ENCODE measurements at regions of chr17 and their contacts with region 1.

Region 1: GRCh38 chr17:58082870-58083490 is at the start of gene DYNLL2:
- DNase-seq: peak; percentile 74 to 88 (median 87)
- ATAC-seq: peak; percentile 91
- H3K4me3 ChIP-seq: peak within 1 kb of the TSS; percentile 88
- H3K4me3 Mint-ChIP-seq: peak within 1 kb of the TSS; percentile 88 to 95 (median 92)
- H3K27ac ChIP-seq: peak within 1 kb of the TSS; percentile 94
- H3K27ac Mint-ChIP-seq: peak within 1 kb of the TSS; percentile 81 to 95 (median 90)
- H3K4me1 ChIP-seq: peaks cover 23 to 34% of the 10 kb centered on the region in 2 donors
- H3K4me1 Mint-ChIP-seq: peaks cover 26 to 40% (median 34%) of the 10 kb centered on the region in 7 donors
- H3K27me3 ChIP-seq: no peaks in the 10 kb centered on the region
- H3K27me3 Mint-ChIP-seq: peaks cover 0 to 31% (median 0%) of the 10 kb centered on the region in 5 donors
- total RNA-seq, gene DYNLL2: 30.1 to 39.1 (median 35.1) TPM

Region 2: GRCh38 chr17:56833809-56834379 is 1249.1 kb before region 1 on chr17 and contains the starts of genes C17orf67 and DGKE:
- CTCF ChIA-PET with region 1: no interaction called
- POLR2A ChIA-PET with region 1: no interaction called
- intact Hi-C with region 1: loop called in 1 of 2 experiments (anchors 2 kb)
- DNase-seq: peak; percentile 95 to 100 (median 98)
- ATAC-seq: peak; percentile 97
- H3K4me3 ChIP-seq: peak within 1 kb of the TSS; percentile 91
- H3K4me3 Mint-ChIP-seq: peak within 1 kb of the TSS; percentile 91 to 98 (median 95)
- H3K27ac ChIP-seq: peak within 1 kb of the TSS; percentile 85
- H3K27ac Mint-ChIP-seq: peak within 1 kb of the TSS; percentile 83 to 95 (median 93)
- H3K4me1 ChIP-seq: peaks cover 41 to 42% of the 10 kb centered on the region in 2 donors
- H3K4me1 Mint-ChIP-seq: peaks cover 34 to 74% (median 62%) of the 10 kb centered on the region in 7 donors
- H3K27me3 ChIP-seq: no peaks in the 10 kb centered on the region
- H3K27me3 Mint-ChIP-seq: no peaks in the 10 kb centered on the region
- total RNA-seq, gene C17orf67: 3.6 to 9.1 (median 5.4) TPM
- total RNA-seq, gene DGKE: 23.7 to 39.2 (median 35.6) TPM

Region 3: GRCh38 chr17:57995076-57995956 is 87.7 kb before region 1 on chr17:
- CTCF ChIA-PET with region 1: no interaction called
- POLR2A ChIA-PET with region 1: interaction called, 4 read pairs
- intact Hi-C with region 1: loop called in 1 of 2 experiments (anchors 2 kb)
- DNase-seq: peak in 8 of 9 donors; percentile 27 to 66 (median 52)
- ATAC-seq: peak; percentile 91
- H3K4me3 ChIP-seq: no peak overlapping the region
- H3K4me3 Mint-ChIP-seq: peak overlapping the region in 4 of 10 donors; percentile 1 to 30 (median 12)
- H3K27ac ChIP-seq: peak overlapping the region; percentile 56
- H3K27ac Mint-ChIP-seq: peak overlapping the region; percentile 10 to 90 (median 70)
- H3K4me1 ChIP-seq: peaks cover 0 to 19% of the 10 kb centered on the region in 2 donors
- H3K4me1 Mint-ChIP-seq: peaks cover 16 to 61% (median 52%) of the 10 kb centered on the region in 7 donors
- H3K27me3 ChIP-seq: no peaks in the 10 kb centered on the region
- H3K27me3 Mint-ChIP-seq: no peaks in the 10 kb centered on the region

Region 4: GRCh38 chr17:58121925-58122324 is 38.9 kb after region 1 on chr17:
- CTCF ChIA-PET with region 1: no interaction called
- POLR2A ChIA-PET with region 1: no interaction called
- intact Hi-C with region 1: loop called in 1 of 2 experiments (anchors 2 kb)
- DNase-seq: peak in 7 of 9 donors; percentile 36 to 70 (median 56)
- ATAC-seq: peak; percentile 81
- H3K4me3 ChIP-seq: no peak overlapping the region
- H3K4me3 Mint-ChIP-seq: peak overlapping the region in 2 of 10 donors; percentile 27 to 33
- H3K27ac ChIP-seq: no peak overlapping the region
- H3K27ac Mint-ChIP-seq: peak overlapping the region in 4 of 9 donors; percentile 10 to 32 (median 12)
- H3K4me1 ChIP-seq: peaks cover 5 to 8% of the 10 kb centered on the region in 2 donors
- H3K4me1 Mint-ChIP-seq: peaks cover 2 to 28% (median 14%) of the 10 kb centered on the region in 7 donors
- H3K27me3 ChIP-seq: no peaks in the 10 kb centered on the region
- H3K27me3 Mint-ChIP-seq: peaks cover 5 to 32% (median 7%) of the 10 kb centered on the region in 5 donors

Region 5: GRCh38 chr17:58172369-58173071 is 89.5 kb after region 1 on chr17:
- CTCF ChIA-PET with region 1: no interaction called
- POLR2A ChIA-PET with region 1: no interaction called
- intact Hi-C with region 1: loop called in 1 of 2 experiments (anchors 1 kb)
- DNase-seq: peak in 7 of 9 donors; percentile 42 to 69 (median 61)
- ATAC-seq: peak; percentile 80
- H3K4me3 ChIP-seq: no peak overlapping the region
- H3K4me3 Mint-ChIP-seq: peak overlapping the region in 9 of 10 donors; percentile 8 to 71 (median 35)
- H3K27ac ChIP-seq: no peak overlapping the region
- H3K27ac Mint-ChIP-seq: peak overlapping the region in 8 of 9 donors; percentile 2 to 96 (median 74)
- H3K4me1 ChIP-seq: peaks cover 38 to 39% of the 10 kb centered on the region in 2 donors
- H3K4me1 Mint-ChIP-seq: peaks cover 31 to 49% (median 48%) of the 10 kb centered on the region in 7 donors
- H3K27me3 ChIP-seq: no peaks in the 10 kb centered on the region
- H3K27me3 Mint-ChIP-seq: peaks cover 0 to 20% (median 2%) of the 10 kb centered on the region in 5 donors

Region 6: DNA sequence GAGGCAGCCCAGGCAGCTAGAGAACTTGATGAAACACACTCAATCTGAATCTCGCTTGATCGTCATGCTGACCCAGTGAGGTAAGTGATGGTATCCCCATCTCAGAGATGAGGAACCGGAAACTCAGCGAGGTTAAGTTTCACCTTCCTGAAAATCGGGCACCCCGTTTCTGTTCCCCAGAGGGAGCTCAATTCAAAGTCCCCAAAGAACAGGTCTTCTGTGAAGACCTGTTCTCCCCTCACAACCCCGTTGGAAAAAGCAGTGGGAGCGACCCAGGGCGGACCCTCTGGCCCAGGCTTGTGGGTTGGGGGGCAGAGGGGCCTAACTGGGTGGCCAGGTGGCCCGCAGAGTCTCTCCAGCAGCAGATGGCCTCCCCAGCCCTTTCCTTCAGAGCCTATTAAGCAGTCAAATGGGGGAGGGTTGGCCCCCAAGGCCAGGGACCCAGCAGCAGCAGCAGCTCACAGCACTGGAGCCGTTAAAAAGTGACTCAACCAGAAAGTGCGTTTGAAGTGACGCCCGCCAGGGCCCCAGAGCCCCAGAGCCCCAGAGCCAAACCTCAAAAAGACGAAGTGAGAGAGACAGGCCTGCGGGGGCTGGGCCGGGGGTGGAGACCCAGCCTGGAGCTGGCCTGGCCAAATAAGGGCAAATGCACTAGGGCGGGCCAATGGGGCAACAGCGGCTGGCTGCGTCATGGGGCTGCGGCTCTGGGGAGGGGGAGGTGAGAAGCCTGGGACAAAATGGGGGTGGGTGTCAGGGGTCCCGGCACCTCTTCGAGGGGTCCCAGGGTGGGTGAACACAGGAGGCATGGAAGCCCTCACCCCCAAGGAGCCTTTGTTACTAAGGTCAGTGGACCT is 254.8 kb after region 1 on chr17:
- CTCF ChIA-PET with region 1: no interaction called
- POLR2A ChIA-PET with region 1: no interaction called
- intact Hi-C with region 1: loop called in 1 of 2 experiments (anchors 5 kb)
- DNase-seq: peak; percentile 73 to 93 (median 85)
- ATAC-seq: peak; percentile 88
- H3K4me3 ChIP-seq: peak overlapping the region; percentile 98
- H3K4me3 Mint-ChIP-seq: peak overlapping the region; percentile 86 to 100 (median 97)
- H3K27ac ChIP-seq: peak overlapping the region; percentile 98
- H3K27ac Mint-ChIP-seq: peak overlapping the region; percentile 89 to 100 (median 95)
- H3K4me1 ChIP-seq: peaks cover 59 to 77% of the 10 kb centered on the region in 2 donors
- H3K4me1 Mint-ChIP-seq: peaks cover 52 to 90% (median 65%) of the 10 kb centered on the region in 7 donors
- H3K27me3 ChIP-seq: no peaks in the 10 kb centered on the region
- H3K27me3 Mint-ChIP-seq: no peaks in the 10 kb centered on the region

Measured in naive thymus-derived CD4-positive, alpha-beta T cell (primary cell).